Right ventricle myocardium superior (tissue), 1 donor: ENCODE measurements at regions of chr12 and their contacts with region 1.

Region 1: DNA sequence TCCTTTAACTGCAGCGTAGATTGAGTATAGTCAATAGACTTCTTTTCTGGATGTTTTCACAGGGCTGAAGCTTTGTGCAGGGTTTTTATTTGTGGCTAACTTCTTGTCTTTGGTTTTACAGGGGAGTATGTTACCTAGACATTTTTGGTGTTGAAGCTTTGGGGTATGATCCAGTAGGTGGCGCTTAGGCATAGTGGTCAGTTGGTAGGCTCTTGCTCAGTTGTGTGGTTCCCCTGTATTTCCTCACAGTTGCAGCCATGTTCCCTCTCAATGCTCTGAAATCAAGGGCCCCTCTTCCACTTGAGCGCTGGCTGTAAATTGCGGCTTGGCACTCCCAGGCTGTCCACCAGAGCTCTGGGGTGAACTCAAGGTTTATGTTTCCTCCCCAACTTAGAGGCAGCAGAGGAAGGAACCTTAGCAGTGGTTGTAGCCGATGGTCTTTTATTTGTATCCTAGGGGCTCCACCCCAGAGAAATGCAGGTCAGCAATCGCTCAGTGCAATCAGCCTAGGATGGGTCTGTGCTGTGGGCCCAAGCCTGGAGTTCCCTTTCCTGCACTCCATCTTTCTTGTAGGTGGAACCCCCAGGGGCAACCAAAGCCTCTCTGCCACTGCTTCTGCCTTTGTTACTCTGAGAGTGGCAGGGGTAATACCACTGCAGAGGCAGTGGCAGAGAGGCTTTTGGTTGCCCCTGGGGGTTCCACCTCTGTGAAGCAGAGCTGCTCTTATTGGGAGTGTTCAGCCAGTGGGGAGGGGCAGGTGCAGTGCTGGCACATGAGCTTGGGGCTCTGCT is 55.1 kb downstream of the CMAS start:
- DNase-seq: no peak
- ATAC-seq: peak; percentile 85

Region 2: DNA sequence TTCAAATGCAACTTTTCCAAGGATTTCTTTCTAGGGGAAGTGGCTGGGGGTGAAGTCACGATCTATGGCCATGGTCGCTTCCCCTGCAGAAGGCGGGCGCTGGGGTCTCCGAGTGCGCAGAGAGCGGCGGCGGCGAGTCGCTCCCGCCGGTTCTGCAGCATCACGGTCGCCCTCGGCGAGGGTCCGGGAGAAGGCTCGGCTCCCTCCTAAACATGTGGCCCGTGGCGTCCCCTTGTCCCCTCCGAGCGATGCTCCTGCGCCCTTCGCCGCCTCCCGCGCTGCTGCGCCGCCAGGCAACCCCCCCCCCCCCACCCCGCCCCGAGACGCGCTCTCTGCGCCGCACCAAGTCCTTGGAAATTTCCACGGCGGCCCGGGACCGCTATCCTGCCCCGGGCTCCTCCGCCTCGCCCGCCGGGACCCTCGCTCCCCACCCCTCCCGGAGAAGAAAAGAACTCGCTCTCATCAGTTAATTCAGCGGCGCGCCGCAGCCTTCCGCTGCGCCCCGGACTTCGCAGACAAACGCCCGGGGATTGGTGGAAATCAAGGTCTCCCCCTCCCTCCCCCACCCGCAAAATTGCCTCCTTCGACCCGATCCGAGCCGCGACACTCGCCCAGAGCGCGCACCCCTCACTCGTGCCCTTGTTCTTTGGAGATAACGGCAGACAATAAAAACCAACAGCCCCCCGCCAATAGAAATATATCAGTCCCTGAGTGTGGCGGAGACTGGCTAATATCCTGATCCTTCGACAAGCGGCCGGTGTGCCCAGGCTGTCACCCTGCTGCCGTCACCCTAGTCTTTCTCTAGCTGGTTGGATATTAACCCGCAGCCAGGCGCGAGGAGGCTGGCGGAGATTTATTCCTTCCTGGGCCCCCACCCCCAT is 233.5 kb after region 1 on chr12 and contains the start of gene ST8SIA1:
- intact Hi-C with region 1: loop called (anchors 5 kb)
- DNase-seq: peak; percentile 60
- ATAC-seq: peak; percentile 71
- total RNA-seq, gene ST8SIA1: 3.3 TPM

Region 3: GRCh38 chr12:22443379-22444316 is 342.5 kb after region 1 on chr12:
- intact Hi-C with region 1: loop called (anchors 5 kb)
- DNase-seq: no peak
- ATAC-seq: peak; percentile 99